Sigmoid colon (tissue), 7 donors: ENCODE measurements at regions of chrX and their contacts with region 1.

Region 1: GRCh38 chrX:120250522-120251271 is at the start of gene ZBTB33:
- DNase-seq: peak; percentile 95
- H3K4me3 ChIP-seq: peak within 1 kb of the TSS; percentile 52 to 73 (median 66)
- H3K27ac ChIP-seq: peak within 1 kb of the TSS; percentile 89 to 93 (median 90)
- H3K4me1 ChIP-seq: peaks cover 0 to 15% (median 4%) of the 10 kb centered on the region in 4 donors
- H3K27me3 ChIP-seq: no peaks in the 10 kb centered on the region
- CTCF ChIP-seq: peak; percentile 43 to 73 (median 52)
- EP300 ChIP-seq: no peak
- POLR2A ChIP-seq: peak in 1 of 2 donors; percentile 51
- total RNA-seq, gene ZBTB33: 5.8 to 13.2 (median 9.8) TPM

Region 2: DNA sequence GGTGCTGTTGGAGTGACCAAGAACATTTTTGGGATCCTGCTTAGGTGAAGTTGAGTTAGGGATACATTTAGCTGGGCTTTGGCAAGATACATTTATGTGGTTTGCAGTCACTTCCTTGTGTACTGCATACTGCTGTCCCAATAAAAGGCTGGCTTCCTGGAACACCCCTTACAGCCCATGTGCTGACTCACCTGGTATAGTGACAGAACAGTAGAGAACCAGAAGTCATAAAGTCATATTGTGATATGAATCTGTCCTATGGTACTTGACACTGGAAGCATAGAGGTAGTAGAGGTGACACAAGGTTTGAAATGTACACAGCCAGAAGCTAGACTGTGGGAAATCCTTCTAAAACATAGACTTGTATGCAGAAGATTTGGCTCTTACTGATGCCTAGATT is 906.8 kb before region 1 on chrX:
- intact Hi-C with region 1: no loop called
- DNase-seq: no peak
- H3K4me3 ChIP-seq: no peak overlapping the region
- H3K27ac ChIP-seq: no peak overlapping the region
- H3K4me1 ChIP-seq: no peaks in the 10 kb centered on the region
- H3K27me3 ChIP-seq: no peaks in the 10 kb centered on the region
- CTCF ChIP-seq: no peak
- EP300 ChIP-seq: no peak
- POLR2A ChIP-seq: no peak

Region 3: GRCh38 chrX:120308959-120309872 is 58.5 kb after region 1 on chrX:
- intact Hi-C with region 1: loop called (anchors 5 kb)
- DNase-seq: peak; percentile 79
- H3K4me3 ChIP-seq: peak overlapping the region in 3 of 4 donors; percentile 36 to 46 (median 42)
- H3K27ac ChIP-seq: no peak overlapping the region
- H3K4me1 ChIP-seq: peaks cover 0 to 24% (median 18%) of the 10 kb centered on the region in 4 donors
- H3K27me3 ChIP-seq: peaks cover 5 to 25% (median 8%) of the 10 kb centered on the region in 3 donors
- CTCF ChIP-seq: peak in 2 of 4 experiments; percentile 6 to 15
- EP300 ChIP-seq: no peak
- POLR2A ChIP-seq: no peak

Region 4: DNA sequence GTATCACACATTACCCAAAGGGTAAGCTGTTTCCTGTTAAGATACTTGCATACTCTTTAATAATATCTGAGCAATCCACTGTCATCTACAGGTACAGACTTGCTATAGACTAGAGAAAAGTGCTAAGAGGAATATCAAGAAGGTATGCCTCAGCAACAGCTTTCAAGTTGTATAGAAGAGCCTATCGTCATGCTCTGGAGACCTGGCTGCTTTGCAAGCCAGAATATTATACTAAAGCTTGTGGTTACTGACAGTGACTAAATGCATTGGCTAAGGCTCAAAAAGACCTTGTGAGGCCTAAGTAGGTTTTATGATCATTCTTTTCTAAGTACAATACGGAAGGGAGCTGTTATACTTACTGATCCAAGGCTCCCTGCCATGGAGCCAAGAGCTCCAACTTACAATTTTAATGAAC is 207.1 kb after region 1 on chrX:
- intact Hi-C with region 1: loop called (anchors 5 kb)
- DNase-seq: no peak
- H3K4me3 ChIP-seq: no peak overlapping the region
- H3K27ac ChIP-seq: peak overlapping the region; percentile 22 to 62 (median 57)
- H3K4me1 ChIP-seq: peaks cover 0 to 29% (median 16%) of the 10 kb centered on the region in 4 donors
- H3K27me3 ChIP-seq: no peaks in the 10 kb centered on the region
- CTCF ChIP-seq: no peak
- EP300 ChIP-seq: no peak
- POLR2A ChIP-seq: no peak